ENCODE measurements at regions of chr14 and their contacts with region 1.

Region 1: DNA sequence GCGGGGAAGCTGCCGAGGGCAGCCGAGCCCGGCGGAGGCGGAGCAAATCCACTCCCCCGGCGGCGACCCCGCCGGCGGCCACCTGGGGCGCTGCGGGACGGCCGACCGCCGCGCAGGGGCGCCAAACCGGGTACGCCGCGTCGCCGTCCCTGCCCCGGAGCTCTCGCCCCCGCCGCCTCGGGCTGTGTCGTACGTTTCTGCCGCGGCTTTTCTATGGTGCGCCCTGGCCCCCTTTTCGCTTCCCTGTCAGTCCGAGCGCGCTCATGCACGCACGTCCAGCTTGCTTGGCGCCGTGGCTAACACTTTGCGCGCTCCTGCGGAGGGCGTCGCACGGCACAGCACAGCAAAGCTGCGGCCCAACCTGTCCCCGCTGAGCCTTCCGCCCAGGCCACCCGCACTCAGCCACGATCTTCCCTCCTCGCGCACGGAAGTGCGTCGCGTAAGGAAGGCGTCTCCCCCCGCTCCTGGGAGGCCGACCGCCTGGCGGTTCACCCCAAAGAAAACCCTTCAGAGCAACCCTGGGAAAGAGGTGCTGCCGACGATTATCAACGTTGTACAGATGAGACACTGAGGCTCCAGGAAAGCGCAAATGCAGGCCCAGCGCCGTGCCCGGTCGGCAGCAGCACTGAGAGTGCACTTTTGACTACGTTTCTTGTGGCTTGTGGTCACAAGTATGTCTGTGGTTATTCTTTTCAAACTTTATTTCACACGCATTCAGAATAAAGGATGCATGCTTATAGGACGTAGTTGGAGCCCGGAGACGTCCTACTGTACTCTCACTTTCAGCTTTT is at the start of gene HECTD1:
- DNase-seq: peak; percentile 91
- H3K4me3 Mint-ChIP-seq: peak within 1 kb of the TSS; percentile 94
- H3K27ac Mint-ChIP-seq: peak within 1 kb of the TSS; percentile 100
- H3K4me1 Mint-ChIP-seq: peaks cover 48% of the 10 kb centered on the region
- H3K27me3 Mint-ChIP-seq: no peaks in the 10 kb centered on the region
- total RNA-seq, gene HECTD1: 84.9 to 88.1 TPM

Region 2: GRCh38 chr14:30994681-30995620 is 213.0 kb before region 1 on chr14:
- CTCF ChIA-PET with region 1: no interaction called
- POLR2A ChIA-PET with region 1: interaction called, 3 read pairs
- intact Hi-C with region 1: loop called (anchors 10 kb)
- DNase-seq: no peak
- H3K4me3 Mint-ChIP-seq: no peak overlapping the region
- H3K27ac Mint-ChIP-seq: peak overlapping the region; percentile 52
- H3K4me1 Mint-ChIP-seq: peaks cover 44% of the 10 kb centered on the region
- H3K27me3 Mint-ChIP-seq: no peaks in the 10 kb centered on the region

Region 3: DNA sequence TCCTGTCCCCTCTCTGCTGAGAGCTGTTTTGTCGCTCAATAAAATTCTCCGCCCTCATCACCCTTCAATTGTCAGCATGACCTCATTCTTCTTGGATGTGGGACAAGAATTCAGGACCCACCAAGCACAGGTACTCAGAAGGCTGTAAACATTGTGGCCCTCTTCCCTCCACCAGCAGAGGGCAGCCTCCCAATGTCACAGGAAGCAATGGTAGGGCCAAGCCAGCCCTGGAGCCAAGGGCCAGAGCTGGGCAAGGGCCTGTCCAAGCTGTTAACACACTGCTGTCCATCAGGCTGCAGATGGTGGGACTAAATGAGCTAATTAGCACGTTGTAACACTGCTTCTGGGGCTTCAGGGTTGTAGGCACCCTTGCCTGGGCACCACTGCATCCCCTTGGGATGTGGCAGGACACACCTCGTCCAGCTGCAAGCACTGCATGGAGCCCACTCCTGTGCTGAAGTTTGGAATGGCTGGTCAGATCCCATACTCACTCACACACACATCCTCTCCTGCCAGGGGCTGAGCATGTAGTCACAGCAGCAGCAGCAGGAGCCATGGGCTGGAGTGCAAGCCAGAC is 62.3 kb after region 1 on chr14:
- CTCF ChIA-PET with region 1: interaction called, 22 read pairs
- POLR2A ChIA-PET with region 1: interaction called, 14 read pairs
- intact Hi-C with region 1: loop called (anchors 2 kb)
- DNase-seq: peak; percentile 49
- H3K4me3 Mint-ChIP-seq: no peak overlapping the region
- H3K27ac Mint-ChIP-seq: no peak overlapping the region
- H3K4me1 Mint-ChIP-seq: peaks cover 17% of the 10 kb centered on the region
- H3K27me3 Mint-ChIP-seq: no peaks in the 10 kb centered on the region

Region 4: DNA sequence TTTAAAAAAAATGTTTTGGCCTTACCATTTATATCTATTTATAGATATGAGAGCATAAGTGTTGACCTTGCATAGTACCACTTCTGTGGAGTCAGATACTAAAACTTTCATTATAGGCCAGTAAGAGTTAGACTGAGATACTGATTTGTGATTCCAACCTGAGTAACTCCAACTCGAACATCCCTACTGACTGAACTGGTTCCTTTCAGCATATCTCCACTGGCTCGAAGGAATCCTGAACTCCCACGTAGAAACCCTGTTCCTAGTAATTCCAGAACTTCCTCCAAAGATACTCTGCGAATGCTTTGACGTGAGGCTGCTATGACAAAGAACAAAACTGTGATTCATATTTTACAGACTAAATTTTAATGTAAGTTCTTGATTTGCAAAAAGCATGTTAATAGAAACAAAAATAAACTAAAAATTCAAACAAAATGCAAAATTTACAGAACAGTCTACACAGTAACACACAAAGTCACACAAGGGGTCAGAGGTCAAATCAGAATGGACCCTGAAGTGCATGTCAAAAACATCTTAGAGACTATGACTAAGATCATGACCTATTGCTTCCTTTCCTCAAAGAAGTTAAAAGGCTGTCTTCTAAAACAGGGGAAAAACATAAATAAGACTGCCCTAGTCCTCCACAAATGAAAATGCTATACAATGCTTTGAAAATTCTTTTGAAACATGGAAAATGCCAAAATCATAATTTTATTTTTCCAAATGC is 180.9 kb after region 1 on chr14:
- CTCF ChIA-PET with region 1: no interaction called
- POLR2A ChIA-PET with region 1: interaction called, 5 read pairs
- intact Hi-C with region 1: loop called (anchors 1 kb)
- DNase-seq: peak; percentile 37
- H3K4me3 Mint-ChIP-seq: no peak overlapping the region
- H3K27ac Mint-ChIP-seq: peak overlapping the region; percentile 60
- H3K4me1 Mint-ChIP-seq: peaks cover 28% of the 10 kb centered on the region
- H3K27me3 Mint-ChIP-seq: no peaks in the 10 kb centered on the region

Region 5: GRCh38 chr14:31561155-31561846 is 353.4 kb after region 1 on chr14 and contains the start of gene NUBPL:
- CTCF ChIA-PET with region 1: no interaction called
- POLR2A ChIA-PET with region 1: no interaction called
- intact Hi-C with region 1: loop called (anchors 1 kb)
- DNase-seq: peak; percentile 98
- H3K4me3 Mint-ChIP-seq: peak within 1 kb of the TSS; percentile 95
- H3K27ac Mint-ChIP-seq: peak within 1 kb of the TSS; percentile 93
- H3K4me1 Mint-ChIP-seq: peaks cover 20% of the 10 kb centered on the region
- H3K27me3 Mint-ChIP-seq: peaks cover 1% of the 10 kb centered on the region
- total RNA-seq, gene NUBPL: 6.9 to 9.1 TPM

Measured in activated CD4-positive, alpha-beta memory T cell treated with anti-CD3 and anti-CD28 coated beads for 36 hours (primary cell).